GM23248 (cell line): ENCODE measurements at regions of chr2 and their contacts with region 1.

Region 1: DNA sequence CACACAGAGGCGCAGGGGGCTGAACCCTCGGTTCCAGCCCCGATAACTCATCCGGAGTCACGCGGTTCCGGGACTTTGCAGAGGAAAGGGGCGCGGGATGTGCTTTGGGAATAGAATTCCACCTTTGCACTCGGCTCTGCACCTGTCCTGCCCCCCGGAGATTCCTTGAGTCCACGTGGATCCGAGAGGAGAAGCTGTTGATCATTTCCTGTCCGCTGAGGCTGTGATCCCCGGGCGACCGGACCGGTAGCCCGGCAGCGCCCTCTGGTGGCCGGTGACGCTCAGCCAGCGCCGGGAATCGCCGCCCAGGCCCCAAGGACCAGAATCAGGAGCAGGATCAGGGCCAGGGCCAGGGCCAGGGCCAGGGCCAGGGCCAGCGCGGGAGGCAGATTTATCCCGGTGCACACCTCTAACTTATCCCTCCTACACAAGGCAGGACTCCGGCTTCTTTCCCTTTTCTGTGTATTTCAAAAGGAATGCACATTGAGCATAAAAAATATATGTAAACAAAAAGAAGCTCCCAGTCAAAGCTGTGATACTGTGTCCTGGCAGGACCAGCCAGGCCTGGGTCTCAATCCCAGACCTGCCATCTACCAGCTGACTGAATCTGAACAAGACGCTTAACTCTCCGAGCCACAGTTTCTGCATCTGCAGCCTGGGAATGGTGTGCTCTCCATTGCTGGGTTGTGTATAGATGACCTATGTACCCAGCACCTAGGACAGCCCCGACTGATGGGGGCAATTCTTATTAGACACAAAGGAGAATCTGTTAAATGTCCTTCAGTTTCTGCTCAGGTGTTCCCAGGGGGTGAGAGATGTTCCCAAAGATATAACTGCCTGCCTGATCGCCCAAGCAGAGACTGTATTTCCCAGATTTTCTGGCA is 8.5 kb upstream of the SPATA3 start:
- DNase-seq: peak; percentile 83
- H3K4me3 ChIP-seq: peak overlapping the region; percentile 68
- H3K27ac ChIP-seq: no peak overlapping the region
- H3K4me1 ChIP-seq: no peaks in the 10 kb centered on the region
- H3K27me3 ChIP-seq: peaks cover 17% of the 10 kb centered on the region

Region 2: GRCh38 chr2:230842473-230842872 is 144.9 kb before region 1 on chr2:
- in situ Hi-C with region 1: loop called (anchors 5 kb)
- DNase-seq: no peak
- H3K4me3 ChIP-seq: no peak overlapping the region
- H3K27ac ChIP-seq: no peak overlapping the region
- H3K4me1 ChIP-seq: no peaks in the 10 kb centered on the region
- H3K27me3 ChIP-seq: peaks cover 15% of the 10 kb centered on the region